Natural killer cell (primary cell): ENCODE measurements at regions of chr9 and their contacts with region 1.

Region 1: DNA sequence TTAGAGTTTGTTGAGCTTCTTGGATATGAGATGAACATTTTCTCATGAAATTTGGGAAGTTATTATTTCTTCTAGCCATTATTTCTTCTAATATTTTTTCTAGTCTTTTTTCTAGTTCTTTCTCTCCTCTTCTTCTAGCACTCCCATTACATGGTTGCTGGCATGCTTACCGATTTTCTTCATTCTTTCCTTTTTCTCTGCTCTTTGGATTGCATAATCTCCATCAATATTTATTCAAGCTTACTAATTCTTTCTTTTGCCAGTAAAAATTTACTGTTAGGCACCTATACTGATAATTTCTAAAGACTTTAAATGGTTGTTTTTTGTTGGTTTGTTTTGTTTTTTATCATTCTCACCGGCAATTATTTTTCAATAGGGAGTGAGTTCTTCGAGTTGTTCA is 114.8 kb upstream of the RASEF start:
- DNase-seq: no peak
- ATAC-seq: no peak
- H3K4me3 ChIP-seq: no peak overlapping the region
- H3K4me3 Mint-ChIP-seq: no peak overlapping the region
- H3K27ac ChIP-seq: no peak overlapping the region
- H3K27ac Mint-ChIP-seq: no peak overlapping the region
- H3K4me1 ChIP-seq: no peaks in the 10 kb centered on the region
- H3K4me1 Mint-ChIP-seq: no peaks in the 10 kb centered on the region
- H3K27me3 ChIP-seq: no peaks in the 10 kb centered on the region
- H3K27me3 Mint-ChIP-seq: no peaks in the 10 kb centered on the region
- CTCF ChIP-seq: no peak

Region 2: GRCh38 chr9:83238871-83239640 is 61.3 kb after region 1 on chr9:
- intact Hi-C with region 1: loop called (anchors 10 kb)
- DNase-seq: no peak
- ATAC-seq: no peak
- H3K4me3 ChIP-seq: no peak overlapping the region
- H3K4me3 Mint-ChIP-seq: no peak overlapping the region
- H3K27ac ChIP-seq: no peak overlapping the region
- H3K27ac Mint-ChIP-seq: no peak overlapping the region
- H3K4me1 ChIP-seq: no peaks in the 10 kb centered on the region
- H3K4me1 Mint-ChIP-seq: no peaks in the 10 kb centered on the region
- H3K27me3 ChIP-seq: no peaks in the 10 kb centered on the region
- H3K27me3 Mint-ChIP-seq: no peaks in the 10 kb centered on the region
- CTCF ChIP-seq: no peak

Region 3: GRCh38 chr9:83656032-83656680 is 478.4 kb after region 1 on chr9:
- intact Hi-C with region 1: no loop called
- DNase-seq: no peak
- ATAC-seq: no peak
- H3K4me3 ChIP-seq: no peak overlapping the region
- H3K4me3 Mint-ChIP-seq: no peak overlapping the region
- H3K27ac ChIP-seq: no peak overlapping the region
- H3K27ac Mint-ChIP-seq: no peak overlapping the region
- H3K4me1 ChIP-seq: no peaks in the 10 kb centered on the region
- H3K4me1 Mint-ChIP-seq: peaks cover 6 to 10% of the 10 kb centered on the region in 2 donors
- H3K27me3 ChIP-seq: no peaks in the 10 kb centered on the region
- H3K27me3 Mint-ChIP-seq: no peaks in the 10 kb centered on the region
- CTCF ChIP-seq: no peak